ENCODE measurements at regions of chr5 and their contacts with region 1.

Region 1: GRCh38 chr5:169805527-169805934 is 168.5 kb downstream of the DOCK2 start:
- DNase-seq: peak; percentile 76
- H3K4me3 Mint-ChIP-seq: peak overlapping the region; percentile 54
- H3K27ac Mint-ChIP-seq: peak overlapping the region; percentile 88
- H3K4me1 Mint-ChIP-seq: peaks cover 41% of the 10 kb centered on the region
- H3K27me3 Mint-ChIP-seq: no peaks in the 10 kb centered on the region

Region 2: GRCh38 chr5:168334695-168335094 is 1470.8 kb before region 1 on chr5:
- intact Hi-C with region 1: no loop called
- DNase-seq: no peak
- H3K4me3 Mint-ChIP-seq: no peak overlapping the region
- H3K27ac Mint-ChIP-seq: no peak overlapping the region
- H3K4me1 Mint-ChIP-seq: no peaks in the 10 kb centered on the region
- H3K27me3 Mint-ChIP-seq: peaks cover 7% of the 10 kb centered on the region

Region 3: DNA sequence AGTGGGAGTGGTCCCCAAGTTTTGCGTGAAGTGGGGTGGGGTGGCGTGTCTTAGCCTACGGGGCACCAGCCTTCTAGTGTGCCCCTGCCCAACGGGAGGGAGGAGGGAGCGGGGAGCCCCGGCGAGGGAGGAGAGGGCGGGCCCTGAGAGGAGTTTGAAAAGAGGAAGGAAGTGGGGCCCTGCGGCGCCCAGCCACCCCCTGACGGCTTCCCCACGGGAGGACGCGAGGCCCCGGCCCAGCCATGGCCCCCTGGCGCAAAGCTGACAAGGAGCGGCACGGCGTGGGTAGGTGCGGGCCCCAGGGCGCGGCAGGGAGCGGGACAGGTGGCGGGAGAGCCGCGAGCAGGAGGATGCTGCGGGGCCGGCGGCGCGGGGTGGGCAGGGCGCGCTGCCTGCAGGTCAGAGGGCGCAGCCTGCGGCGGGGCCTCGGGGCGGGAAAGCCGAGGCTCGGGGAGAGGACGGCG is 168.4 kb before region 1 on chr5 and contains the start of gene DOCK2:
- intact Hi-C with region 1: loop called (anchors 5 kb)
- DNase-seq: peak; percentile 92
- H3K4me3 Mint-ChIP-seq: peak within 1 kb of the TSS; percentile 91
- H3K27ac Mint-ChIP-seq: peak within 1 kb of the TSS; percentile 95
- H3K4me1 Mint-ChIP-seq: peaks cover 41% of the 10 kb centered on the region
- H3K27me3 Mint-ChIP-seq: peaks cover 9% of the 10 kb centered on the region
- total RNA-seq, gene DOCK2: 206 and 215 TPM in 2 replicates

Region 4: DNA sequence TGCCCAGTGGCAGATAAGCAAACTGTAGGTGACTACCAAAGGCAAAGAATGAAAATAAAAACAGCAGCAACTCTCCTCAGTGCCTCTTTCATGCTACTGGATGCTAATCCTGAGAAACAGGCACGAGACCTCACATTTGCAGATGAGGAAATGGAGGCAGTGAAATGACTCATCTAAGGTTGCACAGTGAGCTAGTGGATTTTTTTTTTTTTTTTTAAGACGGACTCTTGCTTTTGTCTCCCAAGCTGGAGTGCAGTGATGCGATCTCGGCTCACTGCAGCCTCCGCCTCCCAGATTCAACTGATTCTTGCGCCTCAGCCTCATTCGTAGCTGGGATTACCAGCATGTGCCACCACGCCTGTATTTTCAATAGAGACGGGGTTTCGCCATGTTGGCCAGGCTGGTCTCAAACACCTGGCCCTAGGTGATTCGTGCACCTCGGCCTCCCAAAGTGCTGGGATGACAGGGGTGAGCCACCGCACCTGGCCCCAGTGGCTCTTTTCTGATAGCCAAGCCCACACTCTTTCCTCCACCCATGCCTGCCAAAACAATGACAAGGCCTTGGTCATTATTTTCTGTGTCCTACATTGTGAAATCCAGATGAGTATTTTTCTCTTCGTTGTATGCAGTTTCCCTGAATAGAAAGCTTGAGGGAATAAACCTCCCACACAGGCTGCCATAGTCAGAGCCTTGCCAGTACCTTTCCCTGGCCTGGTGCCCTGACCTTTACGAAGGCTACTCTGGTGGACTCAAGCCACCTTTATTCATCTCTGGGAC is 149.2 kb before region 1 on chr5:
- intact Hi-C with region 1: loop called (anchors 5 kb)
- DNase-seq: peak; percentile 69
- H3K4me3 Mint-ChIP-seq: peak overlapping the region; percentile 64
- H3K27ac Mint-ChIP-seq: peak overlapping the region; percentile 81
- H3K4me1 Mint-ChIP-seq: peaks cover 61% of the 10 kb centered on the region
- H3K27me3 Mint-ChIP-seq: no peaks in the 10 kb centered on the region

Region 5: GRCh38 chr5:169701910-169702451 is 103.5 kb before region 1 on chr5:
- intact Hi-C with region 1: loop called (anchors 1 kb)
- DNase-seq: no peak
- H3K4me3 Mint-ChIP-seq: no peak overlapping the region
- H3K27ac Mint-ChIP-seq: peak overlapping the region; percentile 51
- H3K4me1 Mint-ChIP-seq: peaks cover 26% of the 10 kb centered on the region
- H3K27me3 Mint-ChIP-seq: no peaks in the 10 kb centered on the region

Region 6: GRCh38 chr5:169778622-169779596 is 26.6 kb before region 1 on chr5:
- intact Hi-C with region 1: loop called (anchors 2 kb)
- DNase-seq: no peak
- H3K4me3 Mint-ChIP-seq: peak overlapping the region; percentile 15
- H3K27ac Mint-ChIP-seq: peak overlapping the region; percentile 67
- H3K4me1 Mint-ChIP-seq: peaks cover 22% of the 10 kb centered on the region
- H3K27me3 Mint-ChIP-seq: no peaks in the 10 kb centered on the region

Region 7: GRCh38 chr5:169826618-169827017 is 21.1 kb after region 1 on chr5:
- intact Hi-C with region 1: no loop called
- DNase-seq: no peak
- H3K4me3 Mint-ChIP-seq: no peak overlapping the region
- H3K27ac Mint-ChIP-seq: no peak overlapping the region
- H3K4me1 Mint-ChIP-seq: peaks cover 22% of the 10 kb centered on the region
- H3K27me3 Mint-ChIP-seq: no peaks in the 10 kb centered on the region

Region 8: DNA sequence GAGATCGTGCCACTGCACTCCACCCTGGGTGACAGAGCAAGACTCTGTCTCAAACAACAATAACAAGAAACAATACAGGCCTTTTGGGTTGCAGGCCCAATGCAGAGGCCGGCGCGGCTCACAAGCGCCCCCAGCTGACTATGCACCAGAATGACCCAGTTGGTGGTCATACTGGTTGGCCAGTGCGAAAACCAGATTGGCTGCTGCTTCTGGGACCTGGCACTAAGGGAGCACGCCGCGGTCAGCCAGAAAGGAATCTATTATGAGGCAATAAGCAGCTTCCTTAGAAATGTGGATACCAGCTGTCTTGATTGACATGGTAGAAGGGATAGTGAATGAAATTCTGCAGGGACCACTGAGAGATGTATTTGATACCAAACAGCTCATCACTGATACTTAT is 1091.2 kb after region 1 on chr5:
- intact Hi-C with region 1: no loop called
- DNase-seq: no peak
- H3K4me3 Mint-ChIP-seq: no peak overlapping the region
- H3K27ac Mint-ChIP-seq: no peak overlapping the region
- H3K4me1 Mint-ChIP-seq: no peaks in the 10 kb centered on the region
- H3K27me3 Mint-ChIP-seq: no peaks in the 10 kb centered on the region